ENCODE measurements at regions of chr17 and their contacts with region 1.

Region 1: DNA sequence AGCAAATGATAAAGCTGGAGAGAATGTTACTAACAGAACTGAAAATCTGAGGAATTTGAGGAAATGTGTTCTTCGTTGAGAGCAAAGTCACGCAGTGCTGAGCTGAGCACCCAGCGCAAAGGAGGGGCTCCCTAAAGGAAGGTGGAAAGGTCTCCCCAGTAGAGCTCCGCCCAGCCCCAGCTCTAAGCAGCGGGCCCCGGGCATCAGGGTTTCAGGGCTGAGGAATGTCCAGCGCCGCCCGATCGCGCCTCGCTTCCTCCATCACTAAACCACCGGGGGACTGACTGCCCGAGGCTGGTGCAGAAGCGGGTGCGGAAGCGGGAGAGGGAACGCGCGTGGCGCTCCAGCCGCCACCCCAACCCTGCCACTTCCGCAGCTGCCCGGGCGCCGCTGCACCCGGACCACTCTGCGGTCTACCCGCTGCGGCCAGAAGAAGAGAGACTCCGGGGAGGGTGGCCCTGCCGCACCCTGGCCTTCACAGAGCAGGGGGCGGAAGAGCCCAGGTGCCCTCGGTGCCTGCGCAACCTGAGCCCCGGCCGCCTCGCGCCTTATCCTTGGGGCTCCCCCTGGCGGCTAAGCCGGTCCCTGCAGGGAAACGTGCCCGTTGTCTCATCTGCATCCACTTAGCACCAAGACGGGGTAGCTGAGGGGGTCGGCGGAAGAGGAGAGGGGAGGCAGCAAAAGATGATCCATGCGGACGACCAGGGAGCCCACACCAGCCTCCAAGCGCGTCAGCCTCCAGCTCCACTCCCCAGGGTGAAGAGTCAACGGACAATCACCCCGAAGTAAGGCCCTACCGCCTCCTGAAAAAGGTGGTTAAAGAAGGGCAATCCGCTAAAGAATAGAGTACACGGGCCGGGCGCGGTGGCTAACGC is 12.4 kb upstream of the GUCY2D start:
- DNase-seq: peak; percentile 86
- H3K4me3 Mint-ChIP-seq: peak overlapping the region; percentile 76
- H3K27ac Mint-ChIP-seq: peak overlapping the region; percentile 67
- H3K4me1 Mint-ChIP-seq: peaks cover 21% of the 10 kb centered on the region
- H3K27me3 Mint-ChIP-seq: peaks cover 9% of the 10 kb centered on the region

Region 2: DNA sequence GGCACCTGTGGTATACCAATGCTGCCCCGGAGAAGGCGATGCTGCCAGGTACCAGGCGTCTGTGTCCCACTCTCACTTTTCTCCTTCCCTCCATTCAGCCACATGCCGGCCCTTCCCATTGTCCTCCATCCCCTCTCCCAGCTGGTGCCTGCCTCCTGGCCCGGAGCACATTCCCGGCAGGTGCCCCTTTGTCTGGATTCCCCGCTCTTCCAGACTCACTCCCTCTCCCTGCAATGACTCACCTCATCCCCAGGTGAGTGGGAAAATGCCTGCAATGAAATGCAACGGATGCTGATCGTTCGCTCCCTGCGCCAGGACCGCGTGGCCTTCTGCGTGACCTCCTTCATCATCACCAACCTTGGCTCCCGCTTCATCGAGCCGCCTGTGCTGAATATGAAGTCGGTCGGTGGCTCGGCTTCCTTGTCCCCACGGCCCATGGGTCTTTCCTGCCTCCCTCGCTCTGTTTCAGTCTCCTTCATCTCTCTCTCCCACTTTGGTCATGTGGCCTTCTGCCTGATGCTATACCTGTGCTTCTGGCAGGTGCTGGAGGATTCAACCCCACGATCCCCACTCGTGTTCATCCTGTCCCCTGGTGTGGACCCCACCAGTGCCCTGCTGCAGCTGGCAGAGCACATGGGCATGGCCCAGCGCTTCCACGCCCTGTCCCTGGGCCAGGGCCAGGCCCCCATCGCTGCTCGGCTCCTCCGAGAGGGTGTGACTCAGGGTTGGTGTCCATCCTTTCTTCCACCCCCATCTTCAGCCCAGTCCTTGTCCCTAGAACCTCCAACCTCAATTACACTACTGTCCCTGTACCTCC is 166.2 kb before region 1 on chr17:
- intact Hi-C with region 1: loop called (anchors 1 kb)
- DNase-seq: no peak
- H3K4me3 Mint-ChIP-seq: no peak overlapping the region
- H3K27ac Mint-ChIP-seq: no peak overlapping the region
- H3K4me1 Mint-ChIP-seq: peaks cover 8% of the 10 kb centered on the region
- H3K27me3 Mint-ChIP-seq: peaks cover 18% of the 10 kb centered on the region

Region 3: DNA sequence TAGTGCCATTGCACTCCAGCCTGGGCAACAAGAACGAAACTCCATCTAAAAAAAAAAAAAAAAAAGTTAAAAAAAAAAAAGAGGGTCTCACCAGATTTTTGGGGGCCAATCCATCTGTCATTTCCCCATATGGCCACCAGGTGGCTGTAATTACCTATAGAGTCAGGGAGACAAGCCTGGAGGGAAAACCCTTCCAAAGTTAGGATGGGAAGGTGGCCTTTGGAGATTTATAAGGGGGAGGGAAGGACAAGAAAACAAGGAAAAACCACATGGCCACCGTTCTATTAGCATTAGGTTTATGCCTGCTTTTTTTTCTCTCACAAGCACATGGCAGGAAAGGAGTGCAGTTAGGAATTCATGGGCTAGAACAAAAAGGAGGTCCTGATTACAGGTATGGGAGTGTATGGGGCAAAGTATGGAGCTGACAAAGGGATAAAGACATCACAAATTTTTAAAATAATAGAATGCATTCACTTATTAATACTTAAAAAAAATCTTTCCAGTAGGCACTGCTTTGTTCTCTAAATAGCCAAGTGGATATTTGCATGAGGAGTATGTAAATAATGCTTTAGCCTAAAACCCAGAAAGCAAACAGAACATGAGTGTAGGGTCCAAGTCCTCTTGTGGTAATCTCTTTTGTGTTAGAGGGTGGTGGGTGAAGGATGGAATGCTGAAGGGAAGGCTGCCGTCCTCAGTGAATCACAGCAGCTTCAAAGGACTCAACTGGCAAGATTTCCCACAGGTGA is 127.2 kb before region 1 on chr17:
- intact Hi-C with region 1: loop called (anchors 1 kb)
- DNase-seq: no peak
- H3K4me3 Mint-ChIP-seq: no peak overlapping the region
- H3K27ac Mint-ChIP-seq: no peak overlapping the region
- H3K4me1 Mint-ChIP-seq: peaks cover 13% of the 10 kb centered on the region
- H3K27me3 Mint-ChIP-seq: no peaks in the 10 kb centered on the region

Region 4: DNA sequence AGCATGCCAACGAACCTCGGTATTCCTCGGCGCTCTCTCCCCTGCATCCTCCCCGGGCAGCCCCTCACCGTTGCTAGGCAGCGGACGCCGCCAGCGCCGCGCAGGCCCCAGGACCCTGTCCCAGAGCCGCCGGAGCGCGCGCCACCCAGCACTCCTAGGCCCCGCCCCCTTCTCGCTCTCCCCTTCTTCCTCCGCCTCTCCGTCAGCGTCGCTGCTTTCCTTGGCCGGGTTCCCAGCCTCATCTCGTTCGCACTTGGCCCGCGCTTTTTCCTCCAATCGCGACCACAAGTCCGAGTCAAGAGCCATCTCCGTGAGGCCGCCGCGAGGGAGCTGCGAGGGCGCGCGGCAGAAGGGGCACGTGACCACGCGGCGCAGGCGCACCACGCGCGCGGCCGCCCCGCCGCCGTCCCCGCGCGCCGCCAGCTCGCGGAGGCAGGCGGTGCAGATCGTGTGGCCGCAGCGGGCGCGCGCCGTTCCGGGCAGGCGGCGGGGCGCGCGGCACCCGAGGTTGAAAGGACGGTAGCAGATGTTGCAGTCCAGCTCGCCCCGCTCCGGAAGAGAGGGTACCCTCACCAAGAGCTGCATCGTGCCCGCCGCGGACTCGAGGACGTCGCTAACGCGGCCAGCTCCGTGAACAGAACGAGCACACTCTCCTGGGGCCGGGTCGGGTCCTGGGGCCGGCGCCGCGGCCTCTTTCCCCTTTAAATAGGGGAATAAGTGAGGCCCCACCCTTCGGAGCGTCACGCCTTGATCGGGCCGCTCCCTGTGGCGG is 74.2 kb before region 1 on chr17 and contains the start of gene RNF227:
- intact Hi-C with region 1: loop called (anchors 1 kb)
- DNase-seq: peak; percentile 77
- H3K4me3 Mint-ChIP-seq: peak within 1 kb of the TSS; percentile 92
- H3K27ac Mint-ChIP-seq: peak within 1 kb of the TSS; percentile 96
- H3K4me1 Mint-ChIP-seq: peaks cover 33% of the 10 kb centered on the region
- H3K27me3 Mint-ChIP-seq: no peaks in the 10 kb centered on the region
- total RNA-seq, gene RNF227: 6.2 and 6.3 TPM in 2 replicates

Region 5: GRCh38 chr17:8041249-8041928 is 51.4 kb after region 1 on chr17:
- intact Hi-C with region 1: loop called (anchors 1 kb)
- DNase-seq: peak; percentile 20
- H3K4me3 Mint-ChIP-seq: no peak overlapping the region
- H3K27ac Mint-ChIP-seq: no peak overlapping the region
- H3K4me1 Mint-ChIP-seq: no peaks in the 10 kb centered on the region
- H3K27me3 Mint-ChIP-seq: peaks cover 26% of the 10 kb centered on the region

Region 6: DNA sequence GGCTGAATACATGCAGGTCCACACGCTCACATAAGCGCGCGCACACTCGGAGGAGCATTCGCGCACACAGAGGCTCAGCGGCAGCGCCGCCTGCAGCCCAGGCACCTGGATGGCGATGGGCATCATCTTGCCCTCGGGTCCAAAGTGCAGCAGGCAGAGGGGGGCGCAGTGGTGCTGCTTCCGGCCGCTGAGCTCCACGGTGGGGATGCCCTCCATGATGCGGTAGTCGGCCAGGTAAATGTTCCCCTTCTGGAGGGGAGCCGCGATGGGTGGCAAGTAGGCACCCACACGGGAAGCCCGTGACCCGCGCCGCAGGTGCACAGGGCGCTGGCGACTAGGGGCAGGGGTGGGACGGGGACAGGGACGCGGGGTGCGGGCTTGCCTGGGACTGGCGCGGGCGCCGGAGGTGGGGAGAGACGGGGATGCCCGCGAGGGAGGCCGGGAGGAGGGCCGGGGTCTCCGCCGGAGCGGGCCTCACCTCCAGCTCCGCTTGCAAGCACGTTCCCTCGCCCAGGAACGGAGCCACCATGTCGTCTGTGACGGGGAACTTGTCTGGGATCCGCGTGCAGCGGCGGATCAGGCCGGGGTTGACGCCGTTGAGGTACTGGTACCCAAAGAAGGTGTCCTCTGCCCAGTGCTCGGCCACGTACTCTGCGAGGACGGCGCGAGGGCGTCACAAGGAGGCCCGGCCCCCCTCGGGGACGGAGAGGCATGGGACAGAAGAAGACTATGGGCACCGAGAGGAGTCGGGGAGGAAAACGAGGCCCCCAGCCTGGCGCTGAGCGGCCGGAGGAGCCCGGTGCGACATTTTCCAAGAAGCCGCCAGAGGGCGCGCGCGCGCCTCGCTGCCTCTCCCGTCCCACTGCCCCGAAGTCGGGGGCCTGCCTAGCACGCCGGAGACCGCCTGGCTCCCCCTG is 89.5 kb after region 1 on chr17:
- intact Hi-C with region 1: no loop called
- DNase-seq: peak; percentile 72
- H3K4me3 Mint-ChIP-seq: peak overlapping the region; percentile 91
- H3K27ac Mint-ChIP-seq: peak overlapping the region; percentile 88
- H3K4me1 Mint-ChIP-seq: peaks cover 8% of the 10 kb centered on the region
- H3K27me3 Mint-ChIP-seq: peaks cover 21% of the 10 kb centered on the region